RWPE1 (cell line): ENCODE measurements at regions of chr9 and their contacts with region 1.

Region 1: DNA sequence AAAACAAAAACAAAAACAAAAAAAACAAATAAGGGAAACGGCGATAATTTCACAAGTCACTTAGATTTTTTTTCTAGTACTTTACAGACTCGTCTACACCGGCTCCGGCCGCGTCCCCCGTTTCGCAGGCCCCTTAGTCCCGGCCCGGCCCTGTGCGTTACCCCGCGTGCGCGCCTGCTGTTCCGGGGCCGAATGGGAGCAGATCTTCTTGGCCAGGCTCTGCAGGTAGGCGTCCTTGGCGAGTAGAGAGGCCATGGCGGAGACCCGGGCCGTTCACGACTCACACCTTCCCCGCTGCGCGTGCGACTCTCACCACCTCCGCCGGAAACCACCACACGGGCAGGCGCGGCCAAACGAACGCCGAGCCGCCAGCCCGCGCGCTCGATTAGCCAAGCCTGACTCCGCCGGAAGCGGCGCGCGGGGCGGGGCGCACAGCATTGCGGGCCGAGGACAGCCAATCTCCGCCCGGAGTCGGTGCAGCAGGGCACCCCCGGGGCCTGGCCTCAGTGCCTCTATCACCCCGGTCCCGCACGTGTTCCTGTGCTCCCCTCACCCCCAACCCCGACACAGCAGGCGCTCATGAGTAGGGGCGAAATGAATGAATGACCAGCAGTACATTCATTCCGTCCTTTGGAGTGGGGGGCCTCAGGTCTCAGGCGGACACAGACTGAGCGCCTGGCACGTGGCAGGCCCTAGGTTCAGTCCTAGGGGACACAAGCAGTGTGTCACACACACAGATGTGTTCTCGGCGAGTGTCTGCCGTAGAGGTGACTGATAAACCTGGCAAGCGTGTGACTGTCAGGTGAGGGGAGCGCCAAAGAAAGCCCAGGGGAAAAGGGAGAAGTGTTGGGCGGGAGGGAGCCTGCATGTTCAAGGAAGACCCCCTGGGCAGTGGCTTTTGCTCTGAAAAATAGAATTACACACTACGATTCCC is at the start of gene SURF6:
- DNase-seq: peak; percentile 90
- H3K27ac ChIP-seq: peak within 1 kb of the TSS; percentile 76
- CTCF ChIP-seq: no peak

Region 2: DNA sequence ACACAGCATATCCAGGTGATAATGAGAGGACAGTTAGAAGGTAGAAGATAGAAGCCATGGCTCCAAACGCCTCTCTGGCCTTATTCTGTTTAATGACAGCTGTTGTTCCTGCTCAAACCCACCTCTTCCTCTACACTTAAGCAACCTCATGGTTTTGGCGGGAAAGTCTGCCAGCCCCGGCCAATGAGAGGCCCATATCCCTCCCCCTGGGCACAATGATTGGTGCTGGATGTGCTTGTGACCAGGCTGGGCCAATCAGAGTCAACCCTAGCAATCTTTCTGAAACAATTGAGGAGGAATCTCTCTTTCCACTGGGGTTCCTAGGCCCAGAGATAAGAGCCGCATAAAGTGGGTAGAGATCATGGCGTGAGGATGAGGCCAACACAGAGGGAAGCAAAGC is 362.4 kb before region 1 on chr9:
- CTCF ChIA-PET with region 1: no interaction called
- POLR2A ChIA-PET with region 1: no interaction called
- DNase-seq: peak; percentile 59
- H3K27ac ChIP-seq: no peak overlapping the region
- CTCF ChIP-seq: no peak

Region 3: DNA sequence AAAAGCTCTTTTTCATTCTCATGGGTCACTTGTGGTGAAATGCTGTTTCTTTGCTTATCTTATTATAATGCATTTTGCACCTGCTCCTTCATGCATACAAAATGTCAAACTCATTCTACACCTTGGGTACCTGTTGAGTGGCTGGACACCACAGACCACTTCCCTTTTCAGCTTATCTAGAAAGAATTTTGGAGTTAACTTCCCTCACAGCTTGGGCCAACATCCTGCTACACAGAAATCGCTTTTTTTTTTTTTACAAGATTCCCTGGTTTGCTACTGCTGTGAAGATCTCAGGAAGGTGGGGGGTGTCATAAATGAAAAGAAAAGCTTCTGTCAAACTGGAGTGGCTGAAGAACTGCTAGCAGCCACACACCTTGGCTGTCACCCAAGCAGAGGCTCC is 79.0 kb after region 1 on chr9:
- CTCF ChIA-PET with region 1: no interaction called
- POLR2A ChIA-PET with region 1: interaction called, 10 read pairs
- DNase-seq: no peak
- H3K27ac ChIP-seq: no peak overlapping the region
- CTCF ChIP-seq: no peak